ENCODE measurements at regions of chr1 and their contacts with region 1.

Region 1: GRCh38 chr1:1441002-1441888 is 5.8 kb downstream of the VWA1 start:
- DNase-seq: peak in 28 of 35 experiments; percentile 14 to 70 (median 42)
- ATAC-seq: peak; percentile 85 to 95 (median 89)
- H3K4me3 ChIP-seq: no peak overlapping the region
- H3K4me3 Mint-ChIP-seq: no peak overlapping the region
- H3K27ac ChIP-seq: no peak overlapping the region
- H3K27ac Mint-ChIP-seq: no peak overlapping the region
- H3K4me1 ChIP-seq: peaks cover 0 to 19% of the 10 kb centered on the region in 2 experiments
- H3K4me1 Mint-ChIP-seq: peaks cover 0 to 6% (median 3%) of the 10 kb centered on the region in 3 donors
- H3K27me3 ChIP-seq: peaks cover 0 to 48% of the 10 kb centered on the region in 2 experiments
- H3K27me3 Mint-ChIP-seq: peaks cover 0 to 26% of the 10 kb centered on the region in 2 donors

Region 2: GRCh38 chr1:1040004-1040991 is 400.9 kb before region 1 on chr1:
- CTCF ChIA-PET with region 1: no interaction called
- POLR2A ChIA-PET with region 1: no interaction called
- DNase-seq: peak; percentile 60 to 92 (median 80)
- ATAC-seq: peak; percentile 91 to 92 (median 92)
- H3K4me3 ChIP-seq: peak overlapping the region; percentile 26 to 36
- H3K4me3 Mint-ChIP-seq: peak overlapping the region; percentile 57 to 77 (median 66)
- H3K27ac ChIP-seq: no peak overlapping the region
- H3K27ac Mint-ChIP-seq: no peak overlapping the region
- H3K4me1 ChIP-seq: peaks cover 0 to 21% of the 10 kb centered on the region in 2 experiments
- H3K4me1 Mint-ChIP-seq: peaks cover 11 to 20% (median 16%) of the 10 kb centered on the region in 3 donors
- H3K27me3 ChIP-seq: peaks cover 0 to 48% of the 10 kb centered on the region in 2 experiments
- H3K27me3 Mint-ChIP-seq: peaks cover 10 to 17% of the 10 kb centered on the region in 2 donors

Region 3: DNA sequence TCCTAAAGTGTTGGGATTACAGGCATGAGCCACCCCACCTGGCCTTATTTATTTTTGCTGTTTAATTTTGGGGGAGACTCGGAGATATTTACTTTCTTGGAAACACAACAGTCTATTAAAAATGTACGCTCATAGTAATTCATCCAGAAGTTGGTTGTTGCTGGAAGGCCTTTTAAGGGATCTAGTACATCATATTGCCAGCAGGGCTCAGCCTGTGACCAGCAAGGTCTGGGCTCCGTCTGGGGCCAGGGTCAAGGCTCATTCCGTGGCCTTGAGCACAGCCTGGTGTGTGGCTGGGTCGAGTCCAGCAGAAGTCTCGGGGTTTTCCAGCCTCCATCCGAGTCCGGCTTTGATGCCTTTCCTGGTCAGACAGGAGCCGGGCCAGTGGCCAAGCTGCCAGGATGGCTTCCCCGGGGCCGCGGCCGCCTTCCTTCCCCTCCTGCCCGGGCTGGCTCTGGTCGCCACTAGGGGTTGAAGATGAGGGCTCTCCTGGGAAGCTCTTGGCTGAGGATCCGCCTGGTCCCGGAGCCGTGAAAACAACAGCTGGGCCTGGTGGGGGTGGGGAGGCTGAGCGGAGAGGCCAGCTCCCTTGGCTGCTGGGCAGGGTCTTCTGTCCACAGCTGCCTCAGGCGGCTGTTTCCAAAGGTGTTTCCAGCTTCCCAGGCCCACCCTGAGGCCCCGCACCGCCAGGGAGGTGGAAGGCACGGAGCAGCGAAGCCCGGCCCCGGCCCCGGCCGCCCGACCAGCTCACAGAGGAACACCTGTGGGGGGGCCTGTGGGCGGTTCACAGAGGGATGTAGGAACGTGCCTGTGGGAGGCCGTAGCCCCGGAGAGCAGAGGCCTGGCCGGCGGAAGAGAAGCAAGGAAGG is 10.9 kb before region 1 on chr1:
- CTCF ChIA-PET with region 1: interaction called in 1 of 2 experiments, 13 read pairs
- POLR2A ChIA-PET with region 1: no interaction called
- DNase-seq: no peak
- ATAC-seq: no peak
- H3K4me3 ChIP-seq: no peak overlapping the region
- H3K4me3 Mint-ChIP-seq: no peak overlapping the region
- H3K27ac ChIP-seq: no peak overlapping the region
- H3K27ac Mint-ChIP-seq: no peak overlapping the region
- H3K4me1 ChIP-seq: peaks cover 0 to 26% of the 10 kb centered on the region in 2 experiments
- H3K4me1 Mint-ChIP-seq: peaks cover 7 to 10% (median 7%) of the 10 kb centered on the region in 3 donors
- H3K27me3 ChIP-seq: peaks cover 0 to 85% of the 10 kb centered on the region in 2 experiments
- H3K27me3 Mint-ChIP-seq: peaks cover 11 to 32% of the 10 kb centered on the region in 2 donors